RWPE1 (cell line): ENCODE measurements at regions of chr6 and their contacts with region 1.

Region 1: GRCh38 chr6:122347280-122347679 is 52.2 kb upstream of the HSF2 start:
- DNase-seq: no peak
- H3K27ac ChIP-seq: no peak overlapping the region
- CTCF ChIP-seq: no peak

Region 2: GRCh38 chr6:122268394-122268793 is 78.9 kb before region 1 on chr6:
- CTCF ChIA-PET with region 1: no interaction called
- POLR2A ChIA-PET with region 1: no interaction called
- DNase-seq: no peak
- H3K27ac ChIP-seq: no peak overlapping the region
- CTCF ChIP-seq: no peak

Region 3: GRCh38 chr6:122360809-122361208 is 13.5 kb after region 1 on chr6:
- CTCF ChIA-PET with region 1: interaction called, 11 read pairs
- POLR2A ChIA-PET with region 1: no interaction called
- DNase-seq: no peak
- H3K27ac ChIP-seq: no peak overlapping the region
- CTCF ChIP-seq: no peak

Region 4: GRCh38 chr6:122553697-122554096 is 206.4 kb after region 1 on chr6:
- CTCF ChIA-PET with region 1: no interaction called
- POLR2A ChIA-PET with region 1: no interaction called
- DNase-seq: no peak
- H3K27ac ChIP-seq: no peak overlapping the region
- CTCF ChIP-seq: no peak